ENCODE measurements at regions of chr9 and their contacts with region 1.

Region 1: DNA sequence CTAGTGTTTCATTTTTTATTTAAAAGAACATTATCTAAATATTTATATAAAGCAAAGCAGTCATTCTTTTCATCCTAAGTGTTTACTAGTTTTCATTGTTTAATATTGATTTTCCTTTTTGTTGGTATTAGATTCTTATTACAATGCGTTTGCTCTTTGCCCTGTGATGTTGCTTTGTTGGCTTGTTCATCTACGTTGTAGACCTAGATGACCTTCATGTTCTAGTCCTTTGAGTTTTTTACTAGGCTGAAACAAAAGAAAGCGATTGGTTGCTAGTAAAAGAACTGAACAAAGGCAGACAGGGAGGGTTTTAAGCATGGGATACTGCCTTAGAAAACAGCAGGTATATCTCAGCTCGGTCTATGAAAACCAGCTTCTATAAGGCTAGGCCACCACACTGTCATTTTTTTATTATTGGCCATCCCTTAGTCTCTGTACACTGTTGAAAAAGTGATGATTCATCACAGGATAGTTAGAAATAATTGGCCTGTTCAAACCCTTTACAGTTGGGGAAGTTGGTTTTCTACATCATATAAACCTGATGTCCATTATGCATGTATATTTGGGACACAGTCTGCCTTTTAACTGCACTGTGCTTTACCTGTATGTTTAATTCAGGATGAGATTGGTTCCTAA is 119.0 kb downstream of the ZCCHC7 start:
- DNase-seq: no peak
- ATAC-seq: no peak
- H3K4me3 ChIP-seq: no peak overlapping the region
- H3K4me3 Mint-ChIP-seq: no peak overlapping the region
- H3K27ac ChIP-seq: peak overlapping the region in 1 of 2 donors; percentile 30
- H3K27ac Mint-ChIP-seq: peak overlapping the region; percentile 53
- H3K4me1 ChIP-seq: peaks cover 19 to 53% of the 10 kb centered on the region in 2 donors
- H3K4me1 Mint-ChIP-seq: peaks cover 61% of the 10 kb centered on the region
- H3K27me3 ChIP-seq: no peaks in the 10 kb centered on the region
- H3K27me3 Mint-ChIP-seq: no peaks in the 10 kb centered on the region
- CTCF ChIP-seq: no peak

Region 2: DNA sequence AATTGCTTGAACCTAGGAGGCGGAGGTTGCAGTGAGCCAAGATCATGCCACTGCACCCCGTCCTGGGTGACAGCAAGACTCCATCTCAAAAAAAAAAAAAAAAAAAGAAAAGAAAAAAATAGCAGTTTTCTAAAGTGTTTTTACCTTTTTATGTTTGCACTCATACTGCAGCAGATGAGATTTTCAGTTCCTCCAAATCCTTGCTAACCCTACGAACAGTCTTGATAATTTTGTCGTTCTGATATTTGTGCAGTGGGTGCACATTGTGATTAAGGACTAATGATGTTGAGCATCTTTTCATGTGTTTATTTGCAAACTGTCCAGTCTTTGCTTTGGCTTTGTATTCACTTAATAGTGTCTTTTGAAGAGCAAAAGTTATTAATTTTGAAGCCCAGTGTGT is 76.0 kb before region 1 on chr9:
- CTCF ChIA-PET with region 1: no interaction called
- POLR2A ChIA-PET with region 1: no interaction called
- intact Hi-C with region 1: loop called (anchors 5 kb)
- DNase-seq: peak; percentile 42
- ATAC-seq: peak; percentile 61
- H3K4me3 ChIP-seq: no peak overlapping the region
- H3K4me3 Mint-ChIP-seq: peak overlapping the region; percentile 61
- H3K27ac ChIP-seq: peak overlapping the region in 1 of 2 donors; percentile 68
- H3K27ac Mint-ChIP-seq: peak overlapping the region; percentile 72
- H3K4me1 ChIP-seq: peaks cover 25 to 38% of the 10 kb centered on the region in 2 donors
- H3K4me1 Mint-ChIP-seq: peaks cover 54% of the 10 kb centered on the region
- H3K27me3 ChIP-seq: no peaks in the 10 kb centered on the region
- H3K27me3 Mint-ChIP-seq: no peaks in the 10 kb centered on the region
- CTCF ChIP-seq: no peak

Region 3: DNA sequence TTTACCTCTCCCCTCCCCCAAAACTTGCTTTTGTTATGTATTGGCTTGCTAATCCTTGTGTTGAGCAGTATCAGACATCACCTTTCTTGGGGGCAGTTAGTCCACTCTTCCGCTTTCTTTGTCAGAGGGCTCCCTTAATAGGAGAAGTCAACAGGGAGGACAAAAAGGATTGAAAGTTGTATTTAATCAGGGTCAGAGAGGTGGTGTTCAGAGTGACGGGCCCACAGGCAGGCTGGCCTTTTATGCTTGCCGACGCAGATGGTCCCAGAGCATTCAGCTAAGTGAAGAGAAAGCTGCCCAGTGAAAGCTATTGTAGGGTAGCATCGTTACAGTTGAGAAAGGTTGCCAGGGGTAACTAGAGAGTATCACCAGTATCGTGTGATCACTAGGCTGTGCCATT is 12.1 kb after region 1 on chr9:
- CTCF ChIA-PET with region 1: interaction called, 3 read pairs
- POLR2A ChIA-PET with region 1: interaction called, 3 read pairs
- intact Hi-C with region 1: loop called (anchors 2 kb)
- DNase-seq: peak; percentile 81
- ATAC-seq: peak; percentile 93
- H3K4me3 ChIP-seq: peak overlapping the region in 1 of 5 experiments; percentile 18
- H3K4me3 Mint-ChIP-seq: peak overlapping the region; percentile 66
- H3K27ac ChIP-seq: peak overlapping the region; percentile 62 to 90
- H3K27ac Mint-ChIP-seq: peak overlapping the region; percentile 96
- H3K4me1 ChIP-seq: peaks cover 34 to 50% of the 10 kb centered on the region in 2 donors
- H3K4me1 Mint-ChIP-seq: peaks cover 59% of the 10 kb centered on the region
- H3K27me3 ChIP-seq: no peaks in the 10 kb centered on the region
- H3K27me3 Mint-ChIP-seq: no peaks in the 10 kb centered on the region
- CTCF ChIP-seq: no peak

Measured in B cell (primary cell).